ENCODE measurements at regions of chr3 and their contacts with region 1.

Region 1: GRCh38 chr3:195187609-195188425 is 83.1 kb downstream of the XXYLT1 start:
- DNase-seq: peak; percentile 55
- H3K4me3 ChIP-seq: no peak overlapping the region
- H3K27ac ChIP-seq: peak overlapping the region; percentile 26
- H3K4me1 ChIP-seq: peaks cover 33% of the 10 kb centered on the region
- H3K27me3 ChIP-seq: no peaks in the 10 kb centered on the region
- CTCF ChIP-seq: no peak
- POLR2A ChIP-seq: no peak

Region 2: DNA sequence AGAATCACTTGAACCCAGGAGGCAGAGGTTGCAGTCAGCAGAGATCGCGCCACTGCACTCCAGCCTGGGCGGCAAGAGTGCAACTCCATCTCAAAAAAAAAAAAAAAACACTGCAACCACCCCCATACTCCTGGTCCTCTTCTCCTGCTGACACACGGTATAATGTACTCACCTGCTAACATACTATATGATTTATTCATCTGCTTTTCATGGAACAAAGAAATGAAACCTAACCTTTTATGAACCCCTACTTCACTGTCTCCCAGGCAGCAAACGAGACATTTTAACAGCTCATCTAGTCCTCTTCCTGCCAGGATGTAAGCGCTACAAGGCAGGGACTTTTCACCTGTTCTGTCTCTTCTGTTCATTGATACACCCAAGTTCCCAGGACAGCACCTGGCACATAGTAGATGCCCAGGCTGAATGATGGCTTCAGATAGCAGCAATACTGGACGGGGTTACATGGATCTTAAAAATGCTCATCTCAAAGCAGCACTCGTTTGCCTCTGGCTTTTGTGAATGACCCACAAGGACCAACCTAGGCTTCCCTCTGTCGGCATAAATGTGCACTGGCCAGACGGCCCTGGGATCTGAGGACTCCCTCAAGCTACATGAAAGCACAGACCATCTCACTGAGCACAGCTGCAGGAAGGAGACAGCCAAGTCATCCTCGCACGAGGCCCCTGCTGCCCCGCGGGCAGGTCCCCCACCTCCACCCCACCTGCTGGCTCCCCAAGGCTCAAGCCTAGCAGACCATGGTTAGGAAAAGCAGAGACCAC is 62.8 kb after region 1 on chr3:
- CTCF ChIA-PET with region 1: interaction called, 12 read pairs
- POLR2A ChIA-PET with region 1: no interaction called
- dilution Hi-C with region 1: no loop called
- intact Hi-C with region 1: no loop called
- DNase-seq: peak; percentile 57
- H3K4me3 ChIP-seq: no peak overlapping the region
- H3K27ac ChIP-seq: no peak overlapping the region
- H3K4me1 ChIP-seq: no peaks in the 10 kb centered on the region
- H3K27me3 ChIP-seq: no peaks in the 10 kb centered on the region
- CTCF ChIP-seq: peak; percentile 20 to 29
- POLR2A ChIP-seq: no peak

Region 3: DNA sequence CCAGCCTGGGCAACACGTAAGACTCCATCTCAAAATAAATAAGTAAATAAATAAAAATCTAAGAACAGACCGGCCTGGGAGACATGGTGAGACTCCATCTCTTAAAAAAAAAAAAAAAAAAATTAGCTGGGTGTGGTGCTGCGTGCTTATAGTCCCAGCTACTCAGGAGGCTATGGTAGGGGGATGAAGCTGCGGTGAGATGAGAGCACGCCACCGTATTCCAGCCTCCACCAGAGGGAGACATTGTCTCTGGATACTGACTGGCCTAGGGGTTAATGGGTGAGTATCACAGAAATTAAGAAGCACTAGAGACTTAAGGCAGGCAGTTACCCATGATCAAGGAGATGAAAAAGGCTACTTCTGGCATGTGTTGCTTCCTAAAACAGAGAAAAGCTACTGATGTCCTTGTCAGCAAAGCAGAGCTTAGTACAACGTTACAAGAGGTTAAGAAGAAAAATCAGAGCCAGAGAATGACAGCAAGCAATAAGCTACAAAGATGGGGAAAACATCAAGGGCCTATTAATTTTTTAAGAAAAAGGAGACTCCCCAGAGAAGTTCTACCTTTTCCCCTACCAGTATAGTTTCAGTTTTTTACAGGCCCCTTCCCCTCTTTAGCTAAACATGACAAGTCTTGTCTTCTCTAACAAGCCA is 885.5 kb after region 1 on chr3:
- CTCF ChIA-PET with region 1: no interaction called
- POLR2A ChIA-PET with region 1: no interaction called
- dilution Hi-C with region 1: no loop called
- intact Hi-C with region 1: no loop called
- DNase-seq: peak; percentile 66
- H3K4me3 ChIP-seq: no peak overlapping the region
- H3K27ac ChIP-seq: no peak overlapping the region
- H3K4me1 ChIP-seq: no peaks in the 10 kb centered on the region
- H3K27me3 ChIP-seq: no peaks in the 10 kb centered on the region
- CTCF ChIP-seq: peak; percentile 72 to 80
- POLR2A ChIP-seq: no peak